PC-3 (cell line): ENCODE measurements at regions of chr1 and their contacts with region 1.

Region 1: GRCh38 chr1:25796811-25797458 is 3.1 kb upstream of the SELENON start:
- DNase-seq: peak; percentile 84
- ATAC-seq: peak; percentile 53
- H3K4me3 ChIP-seq: peak overlapping the region; percentile 12; the same call in 1 of the 2 replicates
- H3K27ac ChIP-seq: no peak overlapping the region
- H3K4me1 ChIP-seq: peaks cover 16% of the 10 kb centered on the region; the same call in 1 of the 2 replicates
- H3K27me3 ChIP-seq: no peaks in the 10 kb centered on the region
- CTCF ChIP-seq: peak; percentile 85

Region 2: DNA sequence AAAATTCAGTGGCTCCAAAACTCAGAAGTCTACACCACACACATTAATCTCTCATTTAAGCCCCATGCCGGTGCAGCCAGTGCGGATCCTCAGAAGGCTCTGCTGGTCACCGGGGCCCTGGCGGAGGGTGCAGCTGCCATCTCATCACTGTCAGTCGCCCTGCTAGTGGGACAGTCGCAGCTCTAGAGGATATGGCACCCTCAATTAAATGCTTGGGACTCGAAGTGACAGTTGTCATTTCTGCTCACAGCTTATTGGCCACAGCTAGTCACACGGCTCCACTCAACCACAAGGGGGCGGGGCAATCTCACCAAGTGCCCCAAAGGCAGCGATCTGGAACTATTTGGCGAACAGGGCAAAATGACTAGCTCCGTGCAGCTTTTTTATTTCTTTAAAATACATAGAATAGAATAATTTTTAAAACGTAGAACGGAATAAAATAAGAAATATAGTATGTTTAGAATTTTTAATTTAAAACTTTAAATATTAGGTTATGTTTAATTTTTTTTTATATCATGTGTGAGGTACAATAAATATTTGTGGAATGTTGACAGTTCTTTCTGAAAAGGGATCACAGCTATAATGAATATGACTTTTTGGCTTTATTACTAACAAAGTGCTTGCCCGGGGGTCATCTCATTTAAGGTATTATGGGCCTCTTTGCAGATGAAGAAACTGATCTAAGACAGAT is 188.3 kb before region 1 on chr1:
- CTCF ChIA-PET with region 1: interaction called, 6 read pairs
- POLR2A ChIA-PET with region 1: no interaction called
- intact Hi-C with region 1: loop called (anchors 1 kb)
- DNase-seq: peak; percentile 75
- ATAC-seq: peak; percentile 94
- H3K4me3 ChIP-seq: peak overlapping the region; percentile 66
- H3K27ac ChIP-seq: no peak overlapping the region
- H3K4me1 ChIP-seq: peaks cover 6% of the 10 kb centered on the region; the same call in 1 of the 2 replicates
- H3K27me3 ChIP-seq: peaks cover 3% of the 10 kb centered on the region; the same call in 1 of the 2 replicates
- CTCF ChIP-seq: peak; percentile 58

Region 3: GRCh38 chr1:25695090-25695770 is 101.7 kb before region 1 on chr1:
- CTCF ChIA-PET with region 1: no interaction called
- POLR2A ChIA-PET with region 1: no interaction called
- intact Hi-C with region 1: loop called (anchors 10 kb)
- DNase-seq: no peak
- ATAC-seq: no peak
- H3K4me3 ChIP-seq: no peak overlapping the region
- H3K27ac ChIP-seq: no peak overlapping the region
- H3K4me1 ChIP-seq: peaks cover 10% of the 10 kb centered on the region
- H3K27me3 ChIP-seq: no peaks in the 10 kb centered on the region
- CTCF ChIP-seq: no peak

Region 4: DNA sequence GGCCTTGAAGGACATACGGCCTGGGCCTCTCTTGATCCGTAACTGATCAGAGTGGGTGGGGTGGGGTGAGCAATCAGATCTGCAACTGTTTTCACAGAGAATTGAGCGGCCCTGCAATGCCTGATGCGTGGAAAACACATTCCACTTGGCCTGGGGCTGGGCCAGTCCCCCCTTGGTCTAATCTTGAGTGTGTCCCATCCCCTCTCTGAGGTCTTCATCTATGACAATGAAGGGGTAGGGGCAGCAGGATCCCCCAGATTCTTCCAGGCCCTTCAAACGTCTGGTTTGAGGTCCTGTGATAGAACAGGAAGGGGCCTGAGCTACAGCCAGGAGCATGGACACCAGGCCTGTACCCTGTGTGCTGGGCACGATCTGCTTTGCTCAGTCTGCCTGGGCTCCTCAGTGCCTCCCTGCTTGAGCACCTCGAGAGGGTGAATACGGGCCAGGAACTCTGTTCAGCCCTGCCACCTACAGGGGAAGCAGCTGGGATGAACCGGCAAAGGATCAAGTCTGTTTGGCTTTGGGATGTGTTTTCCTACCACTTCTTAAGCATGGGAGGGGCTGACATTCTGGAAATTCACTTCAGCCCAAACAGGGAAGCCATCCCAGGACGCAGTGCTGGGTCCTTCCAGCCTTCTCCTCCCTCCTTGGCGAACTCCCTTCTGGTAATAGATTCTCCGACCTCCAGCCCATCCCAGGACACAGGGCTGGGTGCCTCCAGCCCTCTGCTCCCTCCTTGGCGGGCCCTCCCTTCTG is 52.9 kb before region 1 on chr1:
- CTCF ChIA-PET with region 1: interaction called, 11 read pairs
- POLR2A ChIA-PET with region 1: no interaction called
- intact Hi-C with region 1: no loop called
- DNase-seq: peak; percentile 60
- ATAC-seq: peak; percentile 96
- H3K4me3 ChIP-seq: no peak overlapping the region
- H3K27ac ChIP-seq: no peak overlapping the region
- H3K4me1 ChIP-seq: no peaks in the 10 kb centered on the region
- H3K27me3 ChIP-seq: peaks cover 8% of the 10 kb centered on the region; the same call in 1 of the 2 replicates
- CTCF ChIP-seq: peak; percentile 58

Region 5: GRCh38 chr1:25780311-25781129 is 16.4 kb before region 1 on chr1:
- CTCF ChIA-PET with region 1: no interaction called
- POLR2A ChIA-PET with region 1: no interaction called
- intact Hi-C with region 1: no loop called
- DNase-seq: peak; percentile 48
- ATAC-seq: peak; percentile 72
- H3K4me3 ChIP-seq: no peak overlapping the region
- H3K27ac ChIP-seq: no peak overlapping the region
- H3K4me1 ChIP-seq: peaks cover 6% of the 10 kb centered on the region; the same call in 1 of the 2 replicates
- H3K27me3 ChIP-seq: no peaks in the 10 kb centered on the region
- CTCF ChIP-seq: no peak